GM10248 (cell line): ENCODE measurements at regions of chr9 and their contacts with region 1.

Region 1: DNA sequence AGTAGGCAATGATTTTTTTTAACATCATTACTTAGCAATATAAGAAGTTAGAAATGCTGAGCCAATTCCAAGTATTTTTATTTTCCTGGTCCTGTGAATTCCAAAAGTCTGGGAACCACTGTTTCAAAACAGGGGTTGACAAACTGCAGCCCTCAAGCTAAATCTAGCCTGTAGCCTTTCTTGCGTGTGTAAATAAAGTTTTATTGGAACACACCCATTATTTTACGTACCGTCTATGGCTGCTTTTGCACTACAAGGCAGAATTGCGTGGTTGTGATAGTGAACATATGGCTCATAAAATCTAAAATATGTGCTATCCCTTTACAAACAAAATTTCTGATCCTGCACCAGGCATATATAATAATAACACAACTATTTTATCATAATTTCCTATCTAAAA is 279.1 kb downstream of the SAXO1 start:
- DNase-seq: no peak
- CTCF ChIP-seq: no peak

Region 2: GRCh38 chr9:18730241-18730640 is 23.7 kb before region 1 on chr9:
- CTCF ChIA-PET with region 1: no interaction called
- POLR2A ChIA-PET with region 1: no interaction called
- DNase-seq: no peak
- CTCF ChIP-seq: no peak

Region 3: GRCh38 chr9:18741945-18742344 is 12.0 kb before region 1 on chr9:
- CTCF ChIA-PET with region 1: no interaction called
- POLR2A ChIA-PET with region 1: no interaction called
- DNase-seq: no peak
- CTCF ChIP-seq: no peak

Region 4: DNA sequence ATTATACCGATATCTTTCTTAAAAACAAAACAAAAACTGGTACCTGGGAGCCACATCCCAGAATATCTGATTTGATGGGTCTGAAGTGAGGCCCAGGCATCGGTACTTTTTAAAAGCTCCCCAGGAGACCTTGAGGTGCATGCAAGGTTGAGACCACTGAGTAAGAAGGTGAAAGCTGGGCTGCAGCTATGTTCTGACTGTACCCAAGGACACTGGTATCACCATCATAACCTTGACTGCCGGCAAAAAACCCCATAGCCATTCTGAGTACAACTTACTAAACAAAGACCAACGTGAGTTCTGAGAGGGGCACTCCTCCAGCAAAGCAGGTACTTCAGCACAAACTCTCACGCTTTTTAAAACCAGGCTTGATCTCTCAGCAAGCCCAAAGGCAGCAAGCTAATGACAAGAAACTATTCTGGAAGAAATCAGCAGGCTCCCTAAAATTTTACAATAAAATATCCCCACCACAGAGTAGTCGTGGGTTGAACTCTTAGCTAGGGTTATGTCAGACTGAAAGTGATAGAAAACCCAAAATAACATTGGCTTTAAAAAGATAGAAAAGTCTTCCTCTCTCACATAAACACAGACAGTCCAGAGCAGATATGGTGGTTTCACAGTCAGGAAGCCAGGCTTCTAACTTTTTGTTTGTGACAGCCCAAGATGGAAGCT is 15.2 kb after region 1 on chr9:
- CTCF ChIA-PET with region 1: interaction called, 11 read pairs
- POLR2A ChIA-PET with region 1: no interaction called
- DNase-seq: peak; percentile 30
- CTCF ChIP-seq: no peak